GM12878 (cell line): ENCODE measurements at regions of chr1 and their contacts with region 1.

Region 1: DNA sequence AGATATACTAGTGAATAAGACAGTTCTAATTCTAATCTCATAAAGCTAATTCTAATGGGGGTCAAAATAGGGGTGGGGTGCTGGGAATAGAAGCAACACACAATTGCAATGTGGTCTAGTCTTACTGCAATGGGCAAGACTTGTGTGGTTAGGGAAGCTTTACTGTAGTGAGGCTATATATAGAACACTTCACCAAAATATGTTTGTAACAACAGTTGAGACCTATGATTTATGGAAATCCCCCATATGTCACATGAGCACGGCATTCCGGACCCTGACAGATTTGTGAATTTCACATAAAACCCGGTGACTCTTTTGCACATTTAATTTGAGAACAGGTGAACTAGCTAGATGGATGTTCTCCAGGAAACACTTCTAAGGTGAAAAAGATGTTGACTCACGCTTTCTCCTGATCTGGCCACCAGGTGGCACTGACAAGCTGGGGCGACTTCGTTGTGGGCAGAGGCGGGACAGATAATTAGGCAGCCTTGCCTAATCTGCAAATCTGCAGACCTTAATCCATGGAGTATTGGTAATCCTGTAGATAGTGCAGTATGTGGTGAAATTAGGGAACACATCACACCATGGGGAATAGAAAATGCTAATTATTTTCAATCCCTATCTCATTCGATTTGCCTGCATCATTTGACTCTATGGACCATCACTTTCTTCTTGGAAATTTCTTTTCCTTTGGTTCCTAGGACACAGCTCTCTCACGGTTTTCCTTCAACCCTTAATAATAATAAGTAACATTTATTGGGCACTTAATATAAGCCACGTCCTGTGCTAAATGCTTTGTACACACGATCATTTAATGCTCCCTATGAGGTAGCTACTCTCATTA is 37.7 kb downstream of the KIAA0040 start:
- DNase-seq: no peak
- ATAC-seq: peak; percentile 81
- H3K4me3 ChIP-seq: no peak overlapping the region
- H3K27ac ChIP-seq: no peak overlapping the region
- H3K4me1 ChIP-seq: peaks cover 7% of the 10 kb centered on the region; the same call in 1 of the 2 replicates
- H3K27me3 ChIP-seq: peaks cover 0 to 5% of the 10 kb centered on the region in 2 experiments; a peak in 2 of 4 replicates
- CTCF ChIP-seq: peak; percentile 88 to 91 (median 88)
- EP300 ChIP-seq: no peak
- POLR2A ChIP-seq: no peak
- RAD21 ChIP-seq: peak; percentile 99

Region 2: GRCh38 chr1:174938281-174939007 is 216.4 kb before region 1 on chr1:
- CTCF ChIA-PET with region 1: no interaction called
- POLR2A ChIA-PET with region 1: no interaction called
- RAD21 ChIA-PET with region 1: no interaction called
- SMC1A ChIA-PET with region 1: no interaction called
- in situ Hi-C with region 1: no loop called
- intact Hi-C with region 1: no loop called
- DNase-seq: no peak
- ATAC-seq: no peak
- H3K4me3 ChIP-seq: no peak overlapping the region
- H3K27ac ChIP-seq: no peak overlapping the region
- H3K4me1 ChIP-seq: no peaks in the 10 kb centered on the region
- H3K27me3 ChIP-seq: no peaks in the 10 kb centered on the region
- CTCF ChIP-seq: no peak
- EP300 ChIP-seq: no peak
- POLR2A ChIP-seq: no peak
- RAD21 ChIP-seq: no peak

Region 3: GRCh38 chr1:174976436-174977108 is 178.3 kb before region 1 on chr1:
- CTCF ChIA-PET with region 1: no interaction called
- POLR2A ChIA-PET with region 1: no interaction called
- RAD21 ChIA-PET with region 1: no interaction called
- SMC1A ChIA-PET with region 1: no interaction called
- in situ Hi-C with region 1: no loop called
- intact Hi-C with region 1: no loop called
- DNase-seq: no peak
- ATAC-seq: peak; percentile 45
- H3K4me3 ChIP-seq: no peak overlapping the region
- H3K27ac ChIP-seq: no peak overlapping the region
- H3K4me1 ChIP-seq: peaks cover 4% of the 10 kb centered on the region; the same call in 1 of the 2 replicates
- H3K27me3 ChIP-seq: no peaks in the 10 kb centered on the region
- CTCF ChIP-seq: no peak
- EP300 ChIP-seq: no peak
- POLR2A ChIP-seq: no peak
- RAD21 ChIP-seq: no peak

Region 4: DNA sequence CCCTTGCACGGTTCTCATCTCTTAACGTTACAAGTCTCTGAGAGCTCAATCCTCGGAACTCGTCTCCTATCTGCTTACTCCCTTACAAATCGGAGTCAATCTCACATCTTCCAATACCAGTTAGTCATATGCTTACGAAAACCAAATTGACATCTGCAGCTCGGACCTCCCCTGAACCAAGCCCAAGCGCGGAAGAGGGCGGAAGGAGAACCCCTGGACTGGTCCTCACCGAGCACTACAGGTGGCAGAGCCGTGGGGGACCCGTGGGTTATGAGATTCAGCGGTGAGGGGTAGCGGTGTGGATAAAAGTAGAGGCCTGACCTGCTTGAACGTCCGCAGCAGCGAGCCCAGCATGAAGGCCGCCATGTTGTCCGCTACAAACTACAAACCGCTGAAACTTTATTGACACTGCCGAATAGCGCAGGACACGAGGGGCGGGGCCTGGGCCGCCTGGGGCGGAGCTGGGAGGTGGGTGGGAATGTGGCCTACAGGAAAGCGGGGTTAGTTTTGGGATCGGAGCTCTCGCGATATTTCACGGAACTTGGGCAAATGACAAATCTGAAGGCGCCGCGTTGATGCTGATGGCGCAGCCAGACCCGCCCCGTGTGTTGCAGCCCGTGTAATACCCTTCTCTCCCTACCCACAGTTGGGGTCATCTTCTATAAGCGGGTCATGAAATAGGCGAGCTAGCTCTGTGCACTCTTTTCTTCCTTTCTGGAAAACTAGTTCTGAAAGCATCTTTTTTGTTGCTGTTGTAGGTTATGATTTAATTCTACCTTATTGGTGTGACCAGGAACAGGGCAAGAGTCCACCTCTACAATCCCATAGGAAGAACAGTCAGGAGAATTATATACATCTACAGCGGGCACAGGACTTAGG is 131.6 kb before region 1 on chr1 and contains the start of gene MRPS14:
- CTCF ChIA-PET with region 1: interaction called, 46 read pairs
- POLR2A ChIA-PET with region 1: no interaction called
- RAD21 ChIA-PET with region 1: interaction called, 26 read pairs
- SMC1A ChIA-PET with region 1: interaction called, 6 read pairs
- in situ Hi-C with region 1: no loop called
- intact Hi-C with region 1: no loop called
- DNase-seq: peak; percentile 95
- ATAC-seq: peak; percentile 98
- H3K4me3 ChIP-seq: peak within 1 kb of the TSS; percentile 89
- H3K27ac ChIP-seq: peak within 1 kb of the TSS; percentile 90
- H3K4me1 ChIP-seq: no peaks in the 10 kb centered on the region; the same call in 1 of the 2 replicates
- H3K27me3 ChIP-seq: no peaks in the 10 kb centered on the region
- CTCF ChIP-seq: no peak
- EP300 ChIP-seq: no peak
- POLR2A ChIP-seq: peak; percentile 90
- RAD21 ChIP-seq: no peak
- polyA plus RNA-seq, gene MRPS14: 223 to 224 TPM

Region 5: GRCh38 chr1:175174309-175175165 is 19.7 kb after region 1 on chr1:
- CTCF ChIA-PET with region 1: interaction called, 20 read pairs
- POLR2A ChIA-PET with region 1: no interaction called
- RAD21 ChIA-PET with region 1: interaction called, 7 read pairs
- SMC1A ChIA-PET with region 1: interaction called, 20 read pairs
- in situ Hi-C with region 1: no loop called
- intact Hi-C with region 1: no loop called
- DNase-seq: no peak
- ATAC-seq: peak; percentile 87
- H3K4me3 ChIP-seq: no peak overlapping the region; the same call in 1 of the 2 replicates
- H3K27ac ChIP-seq: no peak overlapping the region; the same call in 1 of the 2 replicates
- H3K4me1 ChIP-seq: peaks cover 10% of the 10 kb centered on the region; the same call in 1 of the 2 replicates
- H3K27me3 ChIP-seq: no peaks in the 10 kb centered on the region
- CTCF ChIP-seq: no peak
- EP300 ChIP-seq: no peak; a peak in 1 of 4 replicates
- POLR2A ChIP-seq: no peak
- RAD21 ChIP-seq: no peak

Region 6: DNA sequence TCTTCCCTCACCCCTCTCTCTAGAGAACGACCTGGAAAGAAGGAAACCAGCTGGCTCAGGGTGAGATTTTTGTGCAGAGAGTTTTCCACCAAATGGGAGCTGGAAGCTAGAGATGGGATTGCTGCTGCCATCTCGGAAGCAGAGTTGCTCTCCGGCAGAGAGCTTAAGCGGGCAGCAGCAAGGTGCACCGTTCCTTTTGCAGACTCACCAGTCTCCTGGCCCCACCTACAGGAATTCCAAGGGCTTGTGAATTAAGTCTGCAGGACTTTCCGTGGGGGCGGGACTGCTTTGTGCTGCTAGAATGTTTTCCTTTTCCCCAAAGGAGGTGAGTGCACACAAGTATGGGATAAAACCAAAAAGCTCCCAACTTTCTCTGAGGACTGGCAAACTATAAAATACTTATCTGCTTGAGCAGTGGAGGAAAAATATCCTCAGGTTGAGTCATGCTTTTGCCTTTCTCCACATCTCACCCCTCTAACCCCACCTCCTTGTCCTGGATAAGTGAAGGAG is 66.9 kb after region 1 on chr1:
- CTCF ChIA-PET with region 1: interaction called, 15 read pairs
- POLR2A ChIA-PET with region 1: no interaction called
- RAD21 ChIA-PET with region 1: interaction called, 5 read pairs
- SMC1A ChIA-PET with region 1: interaction called, 11 read pairs
- in situ Hi-C with region 1: no loop called
- intact Hi-C with region 1: no loop called
- DNase-seq: no peak
- ATAC-seq: no peak
- H3K4me3 ChIP-seq: no peak overlapping the region
- H3K27ac ChIP-seq: no peak overlapping the region
- H3K4me1 ChIP-seq: peaks cover 23% of the 10 kb centered on the region
- H3K27me3 ChIP-seq: no peaks in the 10 kb centered on the region
- CTCF ChIP-seq: no peak
- EP300 ChIP-seq: no peak
- POLR2A ChIP-seq: no peak
- RAD21 ChIP-seq: no peak

Region 7: GRCh38 chr1:175314300-175314699 is 159.4 kb after region 1 on chr1:
- CTCF ChIA-PET with region 1: interaction called, 482 read pairs
- POLR2A ChIA-PET with region 1: interaction called, 10 read pairs
- RAD21 ChIA-PET with region 1: interaction called, 193 read pairs
- SMC1A ChIA-PET with region 1: interaction called, 268 read pairs
- in situ Hi-C with region 1: no loop called
- intact Hi-C with region 1: loop called (anchors 1 kb)
- DNase-seq: no peak
- ATAC-seq: peak; percentile 40
- H3K4me3 ChIP-seq: no peak overlapping the region
- H3K27ac ChIP-seq: no peak overlapping the region
- H3K4me1 ChIP-seq: peaks cover 4% of the 10 kb centered on the region; the same call in 1 of the 2 replicates
- H3K27me3 ChIP-seq: no peaks in the 10 kb centered on the region
- CTCF ChIP-seq: no peak
- EP300 ChIP-seq: no peak
- POLR2A ChIP-seq: no peak
- RAD21 ChIP-seq: no peak

Region 8: DNA sequence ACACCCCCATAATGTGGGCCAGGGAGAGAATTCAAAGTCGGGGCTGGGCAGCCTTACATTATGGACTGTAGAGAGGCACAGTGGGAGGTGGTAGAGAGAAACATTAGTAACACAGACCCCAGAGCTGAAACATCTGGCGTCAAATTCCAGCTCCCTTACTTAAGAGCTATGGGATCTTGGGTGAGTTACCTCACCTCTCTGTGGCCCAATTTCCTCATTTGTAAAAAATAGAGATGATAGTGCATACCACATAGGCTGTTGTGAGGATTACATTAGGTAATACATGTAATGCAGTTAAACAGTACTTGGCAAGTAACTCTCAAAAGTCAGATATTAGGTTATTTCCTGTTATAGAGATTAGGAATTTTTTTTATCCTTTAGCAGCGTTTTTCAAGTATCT is 198.2 kb after region 1 on chr1:
- CTCF ChIA-PET with region 1: interaction called, 26 read pairs
- POLR2A ChIA-PET with region 1: no interaction called
- RAD21 ChIA-PET with region 1: interaction called, 6 read pairs
- SMC1A ChIA-PET with region 1: interaction called, 6 read pairs
- in situ Hi-C with region 1: no loop called
- intact Hi-C with region 1: no loop called
- DNase-seq: no peak
- ATAC-seq: no peak; the same call in 2 of the 3 replicates
- H3K4me3 ChIP-seq: no peak overlapping the region
- H3K27ac ChIP-seq: no peak overlapping the region
- H3K4me1 ChIP-seq: no peaks in the 10 kb centered on the region
- H3K27me3 ChIP-seq: peaks cover 0 to 7% of the 10 kb centered on the region in 2 experiments; a peak in 3 of 4 replicates
- CTCF ChIP-seq: no peak
- EP300 ChIP-seq: no peak
- POLR2A ChIP-seq: no peak
- RAD21 ChIP-seq: no peak

Region 9: DNA sequence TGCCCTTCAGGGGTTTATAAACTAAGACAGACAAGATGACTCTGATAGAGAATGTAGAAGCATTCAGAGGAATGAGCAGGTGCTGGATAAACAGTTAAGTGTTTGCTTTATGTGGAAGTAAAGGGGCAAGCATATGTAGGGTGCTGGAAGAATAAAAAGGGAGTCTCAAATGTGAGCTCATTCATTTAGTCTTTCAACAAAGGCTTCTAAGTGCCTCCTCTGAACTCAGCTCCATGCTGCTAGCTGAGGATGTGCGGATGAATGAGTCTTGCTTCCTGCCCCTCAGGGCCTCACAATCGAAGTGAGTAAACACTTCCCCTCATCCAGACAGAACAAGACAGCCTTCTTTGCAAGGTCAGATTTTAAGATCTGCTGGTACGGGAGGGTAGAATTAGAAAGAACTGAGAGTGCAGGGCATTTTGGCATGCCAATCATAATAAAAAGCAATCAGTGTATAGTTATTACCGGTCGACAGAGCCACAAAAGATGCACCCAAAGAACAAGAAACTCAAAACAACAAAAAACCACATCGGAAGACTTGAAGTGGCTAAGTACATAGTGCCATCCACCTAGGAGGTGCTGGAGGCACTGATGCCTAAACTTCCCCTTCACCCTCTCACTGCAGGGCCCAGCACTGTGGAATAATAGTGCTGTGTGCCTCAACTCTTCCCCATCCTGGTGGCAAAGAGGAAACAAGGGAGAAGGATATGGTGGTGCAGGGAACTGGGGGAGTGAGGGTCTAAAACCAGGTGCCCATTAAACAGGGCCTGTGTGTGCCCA is 518.7 kb after region 1 on chr1:
- CTCF ChIA-PET with region 1: no interaction called
- POLR2A ChIA-PET with region 1: no interaction called
- RAD21 ChIA-PET with region 1: no interaction called
- SMC1A ChIA-PET with region 1: no interaction called
- in situ Hi-C with region 1: no loop called
- intact Hi-C with region 1: no loop called
- DNase-seq: peak; percentile 28
- ATAC-seq: peak; percentile 93
- H3K4me3 ChIP-seq: no peak overlapping the region
- H3K27ac ChIP-seq: no peak overlapping the region
- H3K4me1 ChIP-seq: peaks cover 15% of the 10 kb centered on the region
- H3K27me3 ChIP-seq: no peaks in the 10 kb centered on the region
- CTCF ChIP-seq: no peak
- EP300 ChIP-seq: no peak
- POLR2A ChIP-seq: no peak
- RAD21 ChIP-seq: no peak

Region 10: DNA sequence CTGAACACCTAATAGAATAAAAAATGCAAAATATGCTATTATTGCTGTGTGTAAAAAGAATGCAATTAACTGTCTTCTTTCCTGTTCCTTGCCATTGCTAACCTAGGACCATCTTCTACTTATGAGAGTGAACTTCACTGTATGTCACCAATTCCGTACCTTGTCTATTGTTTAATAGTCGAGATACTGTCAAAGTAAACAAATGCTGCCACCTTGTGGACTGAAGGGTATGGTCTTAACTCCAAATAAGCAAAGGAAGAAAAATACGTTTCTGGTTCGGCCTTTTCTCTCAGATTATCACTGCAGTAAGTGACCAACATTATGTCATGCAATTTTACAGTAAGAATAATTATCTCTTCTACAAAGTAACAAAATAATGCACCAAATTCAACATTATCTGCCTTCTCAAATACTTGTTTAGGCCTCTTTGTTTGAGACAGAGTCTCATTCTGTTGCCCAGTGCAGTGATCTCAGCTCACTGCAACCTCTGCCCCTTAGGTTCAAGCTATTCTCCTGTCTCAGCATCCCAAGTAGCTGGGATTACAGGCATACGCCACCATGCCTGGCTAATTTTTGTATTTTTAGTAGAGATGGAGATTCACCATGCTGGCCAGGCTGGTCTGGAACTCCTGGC is 918.8 kb after region 1 on chr1:
- CTCF ChIA-PET with region 1: interaction called, 8 read pairs
- POLR2A ChIA-PET with region 1: no interaction called
- RAD21 ChIA-PET with region 1: interaction called, 4 read pairs
- SMC1A ChIA-PET with region 1: interaction called, 3 read pairs
- in situ Hi-C with region 1: loop called (anchors 10 kb)
- intact Hi-C with region 1: loop called (anchors 10 kb)
- DNase-seq: peak; percentile 7
- ATAC-seq: peak; percentile 91
- H3K4me3 ChIP-seq: no peak overlapping the region
- H3K27ac ChIP-seq: no peak overlapping the region
- H3K4me1 ChIP-seq: no peaks in the 10 kb centered on the region
- H3K27me3 ChIP-seq: no peaks in the 10 kb centered on the region
- CTCF ChIP-seq: peak; percentile 48 to 69 (median 61)
- EP300 ChIP-seq: no peak
- POLR2A ChIP-seq: no peak
- RAD21 ChIP-seq: peak; percentile 79

Region 11: DNA sequence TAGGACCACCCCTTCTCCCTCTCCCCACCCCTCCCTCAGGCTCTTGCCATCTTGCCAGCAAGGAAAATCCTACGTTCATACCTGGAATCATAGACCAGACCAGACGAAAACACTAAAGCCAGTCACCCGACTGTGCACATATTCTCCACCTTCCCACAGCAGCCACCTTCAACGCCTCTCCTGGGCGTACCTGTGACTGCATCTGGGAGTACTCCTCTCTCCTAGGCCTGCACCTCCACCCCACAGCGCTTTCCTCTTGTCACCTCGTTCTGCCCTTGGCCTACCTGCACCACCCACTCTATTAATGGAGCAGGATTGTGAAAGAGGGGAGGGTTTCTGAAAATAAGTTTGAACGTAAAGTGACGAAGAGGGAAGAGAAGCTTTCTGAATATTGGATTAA is 1325.9 kb after region 1 on chr1:
- CTCF ChIA-PET with region 1: no interaction called
- POLR2A ChIA-PET with region 1: no interaction called
- RAD21 ChIA-PET with region 1: no interaction called
- SMC1A ChIA-PET with region 1: no interaction called
- in situ Hi-C with region 1: no loop called
- intact Hi-C with region 1: no loop called
- DNase-seq: no peak
- ATAC-seq: no peak
- H3K4me3 ChIP-seq: no peak overlapping the region
- H3K27ac ChIP-seq: no peak overlapping the region
- H3K4me1 ChIP-seq: no peaks in the 10 kb centered on the region
- H3K27me3 ChIP-seq: no peaks in the 10 kb centered on the region; a peak in 1 of 4 replicates
- CTCF ChIP-seq: no peak
- EP300 ChIP-seq: no peak
- POLR2A ChIP-seq: no peak
- RAD21 ChIP-seq: no peak